ENCODE measurements at regions of chr4 and their contacts with region 1.

Region 1: GRCh38 chr4:113106108-113106507 is 56.7 kb downstream of the ANK2 start:
- DNase-seq: peak; percentile 11
- H3K4me3 ChIP-seq: no peak overlapping the region
- H3K27me3 ChIP-seq: no peaks in the 10 kb centered on the region
- CTCF ChIP-seq: peak; percentile 44

Region 2: GRCh38 chr4:113094802-113095201 is 11.3 kb before region 1 on chr4:
- CTCF ChIA-PET with region 1: interaction called, 10 read pairs
- POLR2A ChIA-PET with region 1: no interaction called
- DNase-seq: no peak
- H3K4me3 ChIP-seq: no peak overlapping the region
- H3K27me3 ChIP-seq: no peaks in the 10 kb centered on the region
- CTCF ChIP-seq: peak; percentile 70